Heart left ventricle (tissue), 16 donors: ENCODE measurements at regions of chr1 and their contacts with region 1.

Region 1: DNA sequence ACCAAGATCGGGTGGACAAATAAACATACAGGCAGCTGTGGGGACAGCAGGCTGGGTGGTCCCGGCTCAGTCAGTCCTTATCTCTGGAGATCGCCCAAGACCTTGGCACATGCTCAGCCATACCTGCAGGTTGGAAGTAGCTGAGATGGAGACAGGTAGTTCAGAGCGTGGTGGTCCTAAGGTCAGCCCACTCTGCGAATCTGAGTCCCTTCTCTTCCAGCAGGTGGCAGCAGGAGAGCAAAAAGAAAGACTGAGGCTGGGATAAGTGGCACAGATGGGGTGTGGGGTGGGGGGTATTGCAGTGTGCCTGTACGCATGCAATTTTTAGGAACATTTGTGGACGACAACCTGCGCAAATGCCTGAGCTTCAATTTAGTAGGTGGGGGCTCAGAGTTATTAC is 104.9 kb downstream of the TENT5C start:
- DNase-seq: no peak
- ATAC-seq: no peak
- H3K4me3 ChIP-seq: no peak overlapping the region
- H3K27ac ChIP-seq: no peak overlapping the region
- H3K4me1 ChIP-seq: peaks cover 0 to 17% (median 0%) of the 10 kb centered on the region in 12 donors
- H3K27me3 ChIP-seq: no peaks in the 10 kb centered on the region
- CTCF ChIP-seq: peak in 1 of 12 donors; percentile 12
- POLR2A ChIP-seq: no peak

Region 2: GRCh38 chr1:117644696-117645311 is 65.9 kb before region 1 on chr1:
- intact Hi-C with region 1: loop called in 2 of 10 experiments (anchors 5 to 10 kb)
- DNase-seq: no peak
- ATAC-seq: no peak
- H3K4me3 ChIP-seq: no peak overlapping the region
- H3K27ac ChIP-seq: no peak overlapping the region
- H3K4me1 ChIP-seq: no peaks in the 10 kb centered on the region
- H3K27me3 ChIP-seq: no peaks in the 10 kb centered on the region
- CTCF ChIP-seq: no peak
- POLR2A ChIP-seq: no peak

Region 3: GRCh38 chr1:117842240-117843170 is 131.8 kb after region 1 on chr1:
- intact Hi-C with region 1: no loop called
- DNase-seq: no peak
- ATAC-seq: no peak
- H3K4me3 ChIP-seq: no peak overlapping the region
- H3K27ac ChIP-seq: no peak overlapping the region
- H3K4me1 ChIP-seq: no peaks in the 10 kb centered on the region
- H3K27me3 ChIP-seq: no peaks in the 10 kb centered on the region
- CTCF ChIP-seq: no peak
- POLR2A ChIP-seq: no peak

Region 4: DNA sequence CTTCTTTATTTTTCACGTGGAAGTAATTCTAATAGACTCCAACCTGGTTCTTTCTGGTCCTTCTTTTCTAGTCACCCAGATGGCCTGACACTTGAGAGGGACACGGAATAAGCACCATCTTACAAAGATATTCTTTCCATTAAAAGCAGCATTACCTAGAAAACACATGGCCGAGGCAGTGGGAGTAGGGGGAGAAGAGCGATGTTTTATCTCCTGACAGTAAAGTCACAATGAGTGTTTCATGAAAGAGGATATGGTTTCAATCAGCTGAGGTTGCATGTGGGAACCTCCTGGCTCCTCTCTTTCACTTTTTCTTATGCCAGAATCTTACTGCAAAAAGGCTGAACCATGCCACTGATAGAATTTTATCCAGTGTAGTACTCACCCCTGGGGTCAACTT is 763.1 kb after region 1 on chr1:
- intact Hi-C with region 1: no loop called
- DNase-seq: no peak
- ATAC-seq: no peak
- H3K4me3 ChIP-seq: no peak overlapping the region
- H3K27ac ChIP-seq: no peak overlapping the region
- H3K4me1 ChIP-seq: no peaks in the 10 kb centered on the region
- H3K27me3 ChIP-seq: no peaks in the 10 kb centered on the region
- CTCF ChIP-seq: no peak
- POLR2A ChIP-seq: no peak